Activated CD4-positive, alpha-beta T cell treated with anti-CD3 and anti-CD28 coated beads, Interleukin-2, amount 10 ng/mL, durations not matched to agents 24 days and 14 days (primary cell): ENCODE measurements at regions of chr2 and their contacts with region 1.

Region 1: DNA sequence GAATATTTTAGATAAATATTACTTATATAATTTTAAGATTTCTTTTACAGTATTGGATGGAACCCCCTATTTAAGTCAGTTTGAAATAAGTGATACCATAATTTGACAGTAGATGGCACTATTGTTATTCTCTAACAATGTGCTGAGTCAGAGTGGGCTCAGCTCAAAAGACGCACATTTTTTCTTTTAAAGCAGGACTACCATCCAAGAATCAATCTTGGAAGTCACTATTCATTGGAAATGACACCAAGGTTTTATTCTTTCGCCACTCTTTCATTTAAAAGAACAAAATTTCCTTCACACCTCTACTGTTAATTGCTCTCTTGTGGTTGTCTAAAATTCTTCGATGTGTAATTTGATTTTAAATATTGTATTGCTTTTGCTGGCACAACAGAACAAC is 32.6 kb upstream of the SPAG16 start:
- DNase-seq: no peak
- H3K4me3 Mint-ChIP-seq: no peak overlapping the region
- H3K27ac Mint-ChIP-seq: no peak overlapping the region
- H3K4me1 Mint-ChIP-seq: peaks cover 2% of the 10 kb centered on the region
- H3K27me3 Mint-ChIP-seq: peaks cover 8% of the 10 kb centered on the region

Region 2: GRCh38 chr2:212686285-212686895 is 565.2 kb before region 1 on chr2:
- intact Hi-C with region 1: loop called (anchors 5 kb)
- DNase-seq: peak; percentile 80
- H3K4me3 Mint-ChIP-seq: no peak overlapping the region
- H3K27ac Mint-ChIP-seq: no peak overlapping the region
- H3K4me1 Mint-ChIP-seq: peaks cover 1% of the 10 kb centered on the region
- H3K27me3 Mint-ChIP-seq: no peaks in the 10 kb centered on the region

Region 3: DNA sequence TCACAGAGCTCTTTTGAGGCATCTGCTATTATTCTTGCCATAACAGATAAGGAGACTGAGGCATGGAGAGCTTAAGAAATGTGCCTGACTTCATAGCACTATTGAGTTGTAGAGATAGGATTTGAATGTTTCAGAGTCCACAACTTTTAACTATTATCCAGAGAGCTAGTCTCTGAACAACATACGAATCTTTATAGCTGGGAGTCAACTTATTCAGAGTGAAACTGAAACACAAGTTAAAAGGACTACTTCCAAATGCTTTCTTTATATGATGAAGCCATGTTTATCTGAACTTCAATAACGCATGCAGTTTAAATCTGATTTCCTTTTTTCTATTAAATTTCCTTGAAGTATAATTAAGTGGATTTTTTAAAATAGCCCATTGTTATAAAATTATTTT is 369.0 kb before region 1 on chr2:
- intact Hi-C with region 1: no loop called
- DNase-seq: no peak
- H3K4me3 Mint-ChIP-seq: no peak overlapping the region
- H3K27ac Mint-ChIP-seq: no peak overlapping the region
- H3K4me1 Mint-ChIP-seq: peaks cover 2% of the 10 kb centered on the region
- H3K27me3 Mint-ChIP-seq: no peaks in the 10 kb centered on the region

Region 4: DNA sequence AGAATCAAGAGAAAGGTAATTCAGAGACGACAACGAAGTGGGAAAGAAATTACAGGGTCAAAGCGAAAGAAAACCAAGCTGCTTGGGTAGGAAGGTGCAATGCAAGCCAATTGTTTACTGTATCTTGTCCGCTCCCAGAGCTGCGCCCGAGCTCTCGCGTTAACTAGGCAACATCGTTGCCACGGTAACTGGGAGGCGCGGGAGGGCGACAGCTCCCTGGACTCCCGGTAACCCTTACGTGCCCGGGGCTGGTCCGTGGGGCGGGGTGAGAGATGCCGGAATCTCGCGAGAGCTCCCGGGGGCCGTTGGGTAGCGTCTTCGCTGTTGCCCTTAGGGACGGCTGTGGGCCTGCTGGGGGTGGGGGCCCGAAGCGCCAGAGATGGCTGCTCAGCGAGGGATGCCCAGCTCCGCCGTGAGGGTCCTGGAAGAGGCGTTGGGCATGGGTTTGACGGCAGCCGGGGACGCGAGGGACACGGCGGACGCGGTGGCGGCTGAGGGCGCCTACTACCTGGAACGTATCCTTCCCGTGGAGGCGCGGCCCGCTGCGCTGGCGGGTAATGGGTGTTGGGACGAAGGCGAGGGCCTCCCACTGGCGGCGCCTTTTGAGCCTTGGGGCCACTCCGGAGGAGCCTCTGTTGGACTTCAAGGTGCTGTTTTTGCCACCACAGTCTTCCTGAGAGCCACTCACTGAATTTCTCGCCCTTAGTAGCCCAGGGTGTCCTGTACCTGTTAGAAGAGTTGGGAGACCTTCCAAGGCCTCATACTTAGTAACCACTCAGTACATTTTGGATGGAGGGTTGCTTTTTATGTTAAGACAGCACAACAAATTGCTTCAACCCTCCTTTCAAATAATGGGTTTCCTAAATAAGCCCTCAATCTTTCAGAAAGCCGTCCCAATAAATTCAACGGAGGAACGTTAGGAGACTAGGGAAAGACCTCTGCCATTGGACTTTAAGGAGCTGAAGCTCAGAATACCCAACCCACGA is 32.8 kb after region 1 on chr2 and contains the start of gene SPAG16:
- intact Hi-C with region 1: loop called (anchors 2 kb)
- DNase-seq: peak; percentile 99
- H3K4me3 Mint-ChIP-seq: peak within 1 kb of the TSS; percentile 96
- H3K27ac Mint-ChIP-seq: peak within 1 kb of the TSS; percentile 87
- H3K4me1 Mint-ChIP-seq: peaks cover 17% of the 10 kb centered on the region
- H3K27me3 Mint-ChIP-seq: peaks cover 5% of the 10 kb centered on the region
- total RNA-seq, gene SPAG16: 6.8 and 7.2 TPM in 2 replicates

Region 5: GRCh38 chr2:213934560-213934959 is 682.9 kb after region 1 on chr2:
- intact Hi-C with region 1: loop called (anchors 2 kb)
- DNase-seq: peak; percentile 64
- H3K4me3 Mint-ChIP-seq: no peak overlapping the region
- H3K27ac Mint-ChIP-seq: no peak overlapping the region
- H3K4me1 Mint-ChIP-seq: peaks cover 2% of the 10 kb centered on the region
- H3K27me3 Mint-ChIP-seq: no peaks in the 10 kb centered on the region